Right ventricle myocardium inferior (tissue), 1 donor: ENCODE measurements at regions of chr14 and their contacts with region 1.

Region 1: GRCh38 chr14:41799817-41800216 is 193.1 kb downstream of the LRFN5 start:
- DNase-seq: no peak
- ATAC-seq: no peak

Region 2: DNA sequence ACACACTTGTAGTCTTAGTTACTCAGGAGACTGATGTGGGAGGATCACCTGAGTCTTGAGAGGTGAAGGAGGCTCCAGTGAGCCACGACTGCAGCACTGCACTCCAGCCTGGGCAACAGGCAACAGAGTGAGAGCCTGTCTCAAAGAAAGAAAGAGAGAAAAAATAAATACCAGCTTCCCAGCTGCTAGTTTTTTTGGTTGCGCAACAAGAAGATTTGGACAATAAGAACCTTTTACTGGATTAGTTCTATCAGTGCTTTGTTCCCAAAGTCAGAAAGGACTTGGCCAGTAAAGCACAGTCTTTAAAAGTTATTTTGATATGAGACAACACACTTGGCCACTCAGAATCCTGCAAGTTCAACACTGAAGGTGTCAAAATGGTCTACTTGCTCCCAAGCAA is 961.2 kb before region 1 on chr14:
- intact Hi-C with region 1: no loop called
- DNase-seq: no peak
- ATAC-seq: no peak

Region 3: DNA sequence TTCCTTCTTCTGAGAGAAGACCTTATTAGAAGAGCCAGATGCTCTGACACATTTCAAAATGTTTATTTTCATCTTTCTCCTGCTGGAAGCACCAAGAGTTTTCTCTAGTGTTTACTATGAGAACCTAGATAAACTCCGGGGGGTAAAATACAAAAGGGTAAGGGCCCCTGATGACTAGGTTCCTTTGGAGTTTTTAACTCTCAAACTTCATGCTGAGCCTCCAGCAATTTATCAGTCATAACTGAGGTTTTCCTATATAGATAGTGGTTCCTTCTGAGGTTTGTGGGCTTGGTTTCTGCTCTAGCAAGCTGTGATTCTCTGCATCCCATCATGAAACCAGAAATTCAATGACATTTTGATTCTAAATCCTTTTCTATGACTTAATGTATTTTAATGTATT is 17.8 kb after region 1 on chr14:
- intact Hi-C with region 1: loop called (anchors 2 kb)
- DNase-seq: no peak
- ATAC-seq: no peak

Region 4: GRCh38 chr14:42002141-42002540 is 202.3 kb after region 1 on chr14:
- intact Hi-C with region 1: no loop called
- DNase-seq: no peak
- ATAC-seq: no peak